Ascending aorta (tissue), 2 donors: ENCODE measurements at regions of chr13 and their contacts with region 1.

Region 1: GRCh38 chr13:80342471-80343380 is 1.8 kb upstream of the SPRY2 start:
- DNase-seq: peak in 1 of 2 donors; percentile 92
- H3K4me3 ChIP-seq: peak overlapping the region; percentile 89 to 91
- H3K27ac ChIP-seq: peak overlapping the region; percentile 96 to 97
- H3K4me1 ChIP-seq: peaks cover 0 to 7% of the 10 kb centered on the region in 2 donors
- H3K27me3 ChIP-seq: no peaks in the 10 kb centered on the region
- CTCF ChIP-seq: peak; percentile 83 to 99 (median 98)

Region 2: DNA sequence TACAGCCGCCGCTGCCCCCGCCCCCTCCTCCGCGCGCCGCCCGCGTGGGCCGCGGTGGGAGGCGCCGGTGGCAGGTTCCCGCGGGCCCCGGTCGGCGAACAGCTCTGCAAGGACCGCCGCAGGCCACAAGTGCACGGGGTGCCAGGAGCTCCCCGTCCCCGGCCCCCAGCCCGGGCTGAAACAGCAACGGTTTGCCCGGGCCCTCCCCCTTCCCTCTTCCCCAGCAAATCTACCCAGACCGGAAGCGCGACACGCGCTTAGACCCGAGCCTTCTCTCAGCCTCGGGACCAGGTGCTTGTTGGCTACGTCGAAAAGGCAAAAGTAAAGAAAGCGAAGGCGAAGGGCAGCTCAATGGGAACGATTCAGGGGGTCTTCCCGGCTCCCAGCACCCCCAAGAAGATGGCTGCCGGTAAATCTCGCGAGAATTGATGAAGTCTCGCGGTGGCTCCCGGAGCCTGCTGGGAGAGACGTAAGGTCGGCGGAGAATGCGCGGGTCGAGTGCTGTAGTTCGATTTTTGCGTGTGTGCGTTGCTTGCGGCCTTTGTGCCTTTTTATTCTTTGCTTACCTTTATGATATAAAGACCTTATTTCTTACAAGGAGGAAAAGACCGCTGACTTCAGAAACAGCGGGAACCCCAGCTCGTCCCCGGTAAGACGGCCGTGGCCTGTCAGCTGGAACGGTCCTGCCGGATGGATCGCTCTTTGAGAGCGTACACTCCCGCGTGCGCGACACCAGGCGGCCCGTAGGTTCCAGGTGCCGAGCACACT is 936.7 kb before region 1 on chr13 and contains the start of gene RBM26:
- intact Hi-C with region 1: loop called (anchors 5 kb)
- DNase-seq: peak; percentile 72 to 95
- H3K4me3 ChIP-seq: peak within 1 kb of the TSS; percentile 99 to 100
- H3K27ac ChIP-seq: peak within 1 kb of the TSS; percentile 94 to 99
- H3K4me1 ChIP-seq: peaks cover 0 to 35% of the 10 kb centered on the region in 2 donors
- H3K27me3 ChIP-seq: no peaks in the 10 kb centered on the region
- CTCF ChIP-seq: peak in 1 of 3 experiments; percentile 10
- total RNA-seq, gene RBM26: 12.8 TPM

Region 3: DNA sequence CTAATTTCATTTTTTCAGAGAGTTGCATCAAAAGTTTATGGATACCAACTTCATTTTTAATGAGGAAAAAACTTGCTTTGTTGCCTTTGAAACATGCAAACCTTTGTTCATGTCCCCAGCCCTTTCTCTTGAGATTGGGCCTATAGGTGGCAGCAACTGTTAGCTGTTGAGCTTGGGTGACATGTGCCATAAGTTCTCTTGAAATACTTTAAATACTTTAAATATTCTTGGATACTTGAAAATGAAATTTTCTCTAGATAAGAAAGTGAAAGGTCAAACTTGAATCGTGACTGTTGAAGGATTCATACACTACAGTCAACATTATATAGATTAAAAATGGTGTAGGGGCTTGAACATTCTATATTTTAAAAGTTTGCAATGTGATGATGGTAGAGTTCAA is 566.9 kb before region 1 on chr13:
- intact Hi-C with region 1: loop called (anchors 5 kb)
- DNase-seq: no peak
- H3K4me3 ChIP-seq: no peak overlapping the region
- H3K27ac ChIP-seq: no peak overlapping the region
- H3K4me1 ChIP-seq: peaks cover 0 to 7% of the 10 kb centered on the region in 2 donors
- H3K27me3 ChIP-seq: no peaks in the 10 kb centered on the region
- CTCF ChIP-seq: peak; percentile 22 to 69 (median 51)

Region 4: GRCh38 chr13:80048802-80049201 is 293.9 kb before region 1 on chr13:
- intact Hi-C with region 1: loop called (anchors 5 kb)
- DNase-seq: peak; percentile 90 to 96
- H3K4me3 ChIP-seq: peak overlapping the region in 1 of 2 donors; percentile 28
- H3K27ac ChIP-seq: peak overlapping the region; percentile 54 to 70
- H3K4me1 ChIP-seq: peaks cover 7 to 16% of the 10 kb centered on the region in 2 donors
- H3K27me3 ChIP-seq: no peaks in the 10 kb centered on the region
- CTCF ChIP-seq: no peak

Region 5: GRCh38 chr13:80363890-80364503 is 21.3 kb after region 1 on chr13:
- intact Hi-C with region 1: loop called (anchors 1 kb)
- DNase-seq: no peak
- H3K4me3 ChIP-seq: peak overlapping the region; percentile 28 to 29
- H3K27ac ChIP-seq: no peak overlapping the region
- H3K4me1 ChIP-seq: peaks cover 0 to 12% of the 10 kb centered on the region in 2 donors
- H3K27me3 ChIP-seq: no peaks in the 10 kb centered on the region
- CTCF ChIP-seq: peak in 2 of 3 experiments; percentile 71 to 76

Region 6: DNA sequence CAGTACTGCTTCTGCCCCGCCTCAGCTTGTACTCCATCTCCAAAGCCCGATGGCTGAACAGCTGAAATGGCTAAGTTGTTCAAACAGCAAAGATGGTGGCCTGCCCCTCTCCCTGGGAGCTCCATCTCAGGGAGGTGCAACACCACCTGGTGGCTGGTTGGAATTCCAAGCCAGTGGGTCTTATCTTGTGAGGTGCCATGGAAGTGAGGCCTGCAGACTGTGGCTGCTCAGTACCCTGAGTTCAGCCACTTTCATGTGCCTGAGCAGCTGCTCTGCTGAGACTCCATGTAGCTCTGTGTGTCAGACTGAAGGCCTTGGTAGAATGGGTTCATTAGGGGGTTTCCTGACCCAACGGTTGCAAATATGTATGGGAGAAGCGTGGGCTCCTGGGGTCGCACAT is 65.5 kb after region 1 on chr13:
- intact Hi-C with region 1: no loop called
- DNase-seq: no peak
- H3K4me3 ChIP-seq: no peak overlapping the region
- H3K27ac ChIP-seq: no peak overlapping the region
- H3K4me1 ChIP-seq: no peaks in the 10 kb centered on the region
- H3K27me3 ChIP-seq: no peaks in the 10 kb centered on the region
- CTCF ChIP-seq: no peak

Region 7: GRCh38 chr13:80618781-80619180 is 276.1 kb after region 1 on chr13:
- intact Hi-C with region 1: loop called (anchors 5 kb)
- DNase-seq: peak in 1 of 2 donors; percentile 68
- H3K4me3 ChIP-seq: no peak overlapping the region
- H3K27ac ChIP-seq: peak overlapping the region; percentile 53 to 72
- H3K4me1 ChIP-seq: peaks cover 0 to 3% of the 10 kb centered on the region in 2 donors
- H3K27me3 ChIP-seq: no peaks in the 10 kb centered on the region
- CTCF ChIP-seq: no peak

Region 8: GRCh38 chr13:81017513-81018152 is 674.9 kb after region 1 on chr13:
- intact Hi-C with region 1: loop called (anchors 5 kb)
- DNase-seq: no peak
- H3K4me3 ChIP-seq: no peak overlapping the region
- H3K27ac ChIP-seq: no peak overlapping the region
- H3K4me1 ChIP-seq: no peaks in the 10 kb centered on the region
- H3K27me3 ChIP-seq: no peaks in the 10 kb centered on the region
- CTCF ChIP-seq: peak; percentile 29 to 59 (median 32)